ENCODE measurements at regions of chr2 and their contacts with region 1.

Region 1: DNA sequence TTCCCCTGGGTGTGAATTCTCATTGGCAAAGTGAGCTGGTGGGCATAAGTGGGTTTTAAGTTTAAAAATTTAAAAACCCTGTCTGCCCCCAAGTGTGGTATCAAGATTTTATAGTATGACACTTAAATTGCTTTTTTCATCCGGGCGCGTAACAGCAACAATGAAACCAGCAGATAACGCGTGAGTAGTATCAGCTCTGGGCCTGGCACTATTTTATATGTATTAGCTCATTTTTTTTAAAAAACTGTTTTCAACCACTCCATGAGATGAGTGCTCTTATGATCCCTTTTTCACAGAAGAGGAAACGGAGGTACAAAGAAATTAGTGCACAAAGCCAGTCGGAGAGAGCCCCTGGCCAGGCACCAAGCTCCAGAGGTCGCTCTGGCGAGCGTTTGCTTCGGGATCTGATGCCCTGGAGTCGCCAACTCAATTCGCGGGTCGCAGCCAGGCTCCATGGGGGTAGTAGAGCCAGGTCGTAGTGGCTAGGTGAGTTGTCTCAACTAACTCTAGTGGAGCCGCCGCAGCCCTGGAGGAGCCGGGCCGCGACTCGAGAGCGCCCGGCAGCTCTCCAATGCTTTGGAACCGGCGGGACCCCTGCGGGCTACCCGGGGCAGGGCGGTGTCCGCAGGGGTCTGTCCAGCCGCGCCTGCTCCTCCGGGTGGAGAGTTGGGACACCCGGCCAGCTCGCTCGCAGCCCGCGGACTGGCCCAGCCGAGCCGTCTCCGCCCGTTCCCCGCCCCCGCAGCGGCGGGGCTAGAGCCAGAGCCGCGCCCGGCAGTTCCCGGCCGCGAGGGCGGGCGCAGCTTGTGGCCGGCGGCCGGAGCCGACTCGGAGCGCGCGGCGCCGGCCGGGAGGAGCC is at the start of gene IL1R1:
- DNase-seq: peak; percentile 80
- ATAC-seq: peak; percentile 98
- H3K4me3 ChIP-seq: peak within 1 kb of the TSS; percentile 84
- H3K27ac ChIP-seq: no peak within 1 kb of the TSS
- H3K4me1 ChIP-seq: peaks cover 8% of the 10 kb centered on the region; the same call in 1 of the 2 replicates
- H3K27me3 ChIP-seq: no peaks in the 10 kb centered on the region
- CTCF ChIP-seq: no peak
- total RNA-seq, gene IL1R1: 0.40 and 0.69 TPM in 2 replicates

Region 2: GRCh38 chr2:102033750-102034682 is 108.2 kb before region 1 on chr2:
- CTCF ChIA-PET with region 1: no interaction called
- POLR2A ChIA-PET with region 1: interaction called, 10 read pairs
- intact Hi-C with region 1: no loop called
- DNase-seq: no peak
- ATAC-seq: no peak
- H3K4me3 ChIP-seq: no peak overlapping the region
- H3K27ac ChIP-seq: no peak overlapping the region
- H3K4me1 ChIP-seq: peaks cover 11% of the 10 kb centered on the region
- H3K27me3 ChIP-seq: no peaks in the 10 kb centered on the region
- CTCF ChIP-seq: no peak

Region 3: GRCh38 chr2:102190430-102191107 is 48.4 kb after region 1 on chr2:
- CTCF ChIA-PET with region 1: no interaction called
- POLR2A ChIA-PET with region 1: no interaction called
- intact Hi-C with region 1: no loop called
- DNase-seq: no peak
- ATAC-seq: no peak
- H3K4me3 ChIP-seq: no peak overlapping the region
- H3K27ac ChIP-seq: no peak overlapping the region
- H3K4me1 ChIP-seq: peaks cover 14% of the 10 kb centered on the region
- H3K27me3 ChIP-seq: no peaks in the 10 kb centered on the region
- CTCF ChIP-seq: no peak